Activated CD4-positive, alpha-beta T cell treated with anti-CD3 and anti-CD28 coated beads, Interleukin-2, amount 10 ng/mL, durations not matched to agents 24 days and 14 days (primary cell): ENCODE measurements at regions of chr2 and their contacts with region 1.

Region 1: DNA sequence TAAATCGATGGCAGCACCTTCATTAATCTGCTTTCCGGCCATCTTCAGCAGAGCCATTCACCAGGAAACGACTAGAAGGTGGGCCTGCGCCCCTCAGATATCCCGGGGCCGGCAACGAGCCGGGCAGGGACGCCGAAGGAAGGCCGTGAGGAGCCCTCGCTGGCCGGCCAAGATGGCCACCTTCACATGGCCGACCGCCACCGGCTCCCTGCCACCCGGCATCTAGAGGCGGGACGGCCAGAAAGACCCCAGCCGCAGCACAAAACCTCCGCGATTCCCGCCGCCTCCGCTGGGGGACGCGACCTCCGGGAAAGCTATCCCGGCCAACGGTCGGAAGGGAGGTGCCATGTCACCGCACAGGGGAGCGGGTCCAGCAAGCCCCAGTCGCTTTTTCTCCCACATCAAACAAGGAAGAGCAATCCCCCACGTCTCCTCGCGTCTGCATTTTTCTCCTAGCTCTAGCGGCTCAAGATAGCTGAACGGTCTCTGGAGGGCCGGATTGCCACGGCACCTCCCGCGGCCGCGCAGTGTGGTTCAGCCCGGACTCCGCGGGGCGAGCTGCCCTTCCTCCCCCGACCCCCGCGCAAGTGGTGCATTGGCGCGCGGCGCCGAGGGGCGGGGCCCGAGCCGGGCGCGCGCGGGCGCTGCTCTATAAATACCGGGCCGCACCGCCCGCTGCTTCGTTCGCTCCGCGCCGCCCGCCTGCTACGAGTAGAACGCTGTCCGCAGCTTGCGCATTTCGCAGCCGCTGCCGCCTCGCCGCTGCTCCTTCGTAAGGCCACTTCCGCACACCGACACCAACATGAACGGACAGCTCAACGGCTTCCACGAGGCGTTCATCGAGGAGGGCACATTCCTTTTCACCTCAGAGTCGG is at the start of gene MAT2A:
- DNase-seq: peak; percentile 97
- H3K4me3 Mint-ChIP-seq: peak within 1 kb of the TSS; percentile 96
- H3K27ac Mint-ChIP-seq: peak within 1 kb of the TSS; percentile 98
- H3K4me1 Mint-ChIP-seq: peaks cover 36% of the 10 kb centered on the region
- H3K27me3 Mint-ChIP-seq: no peaks in the 10 kb centered on the region
- total RNA-seq, gene MAT2A: 481 and 492 TPM in 2 replicates

Region 2: DNA sequence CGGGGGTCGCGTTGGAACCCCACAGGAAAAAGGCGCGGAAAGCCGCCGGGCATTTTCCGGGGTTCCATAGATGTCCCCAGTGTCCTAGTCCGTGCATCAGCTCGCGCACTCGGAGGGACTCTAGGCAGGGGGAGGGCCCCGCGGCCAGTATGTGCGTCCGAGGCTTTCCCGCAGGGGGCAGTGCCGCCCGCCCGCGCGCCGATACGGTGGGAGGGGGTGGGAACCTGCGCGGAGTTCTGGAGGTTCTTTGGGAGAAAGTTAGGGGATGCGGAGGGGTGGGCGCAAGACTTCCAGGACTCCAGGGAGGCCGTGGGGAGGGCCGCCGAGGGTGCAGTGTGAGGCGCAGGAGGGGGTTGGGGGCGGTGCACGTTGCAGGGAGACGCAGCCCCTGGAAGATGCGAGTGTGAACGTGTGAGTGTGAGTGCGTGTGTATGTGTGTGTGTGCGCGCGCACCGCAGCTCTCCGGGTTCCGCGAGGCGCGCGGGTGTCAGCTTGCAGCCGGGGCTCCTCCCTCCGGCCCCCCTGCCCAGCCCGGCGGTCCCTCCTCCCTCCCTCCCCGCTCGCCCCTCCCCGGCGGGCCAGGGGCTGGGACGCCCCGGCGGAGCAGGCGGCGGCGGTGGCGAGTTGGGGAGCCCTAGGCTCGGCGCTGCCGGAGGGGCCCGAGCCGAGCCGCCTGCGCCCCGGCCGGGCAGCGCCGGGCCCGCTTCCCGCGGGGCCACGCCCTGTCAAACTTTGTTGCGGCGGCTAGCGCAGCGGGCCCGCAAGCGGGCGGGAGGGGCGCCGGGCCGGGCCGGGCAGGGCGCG is 405.7 kb before region 1 on chr2 and contains the start of gene TCF7L1:
- intact Hi-C with region 1: no loop called
- DNase-seq: peak; percentile 80
- H3K4me3 Mint-ChIP-seq: peak within 1 kb of the TSS; percentile 78
- H3K27ac Mint-ChIP-seq: no peak within 1 kb of the TSS
- H3K4me1 Mint-ChIP-seq: peaks cover 9% of the 10 kb centered on the region
- H3K27me3 Mint-ChIP-seq: peaks cover 66% of the 10 kb centered on the region
- total RNA-seq, gene TCF7L1: 0.19 TPM in 1 of 2 replicates, not detected in the other

Region 3: DNA sequence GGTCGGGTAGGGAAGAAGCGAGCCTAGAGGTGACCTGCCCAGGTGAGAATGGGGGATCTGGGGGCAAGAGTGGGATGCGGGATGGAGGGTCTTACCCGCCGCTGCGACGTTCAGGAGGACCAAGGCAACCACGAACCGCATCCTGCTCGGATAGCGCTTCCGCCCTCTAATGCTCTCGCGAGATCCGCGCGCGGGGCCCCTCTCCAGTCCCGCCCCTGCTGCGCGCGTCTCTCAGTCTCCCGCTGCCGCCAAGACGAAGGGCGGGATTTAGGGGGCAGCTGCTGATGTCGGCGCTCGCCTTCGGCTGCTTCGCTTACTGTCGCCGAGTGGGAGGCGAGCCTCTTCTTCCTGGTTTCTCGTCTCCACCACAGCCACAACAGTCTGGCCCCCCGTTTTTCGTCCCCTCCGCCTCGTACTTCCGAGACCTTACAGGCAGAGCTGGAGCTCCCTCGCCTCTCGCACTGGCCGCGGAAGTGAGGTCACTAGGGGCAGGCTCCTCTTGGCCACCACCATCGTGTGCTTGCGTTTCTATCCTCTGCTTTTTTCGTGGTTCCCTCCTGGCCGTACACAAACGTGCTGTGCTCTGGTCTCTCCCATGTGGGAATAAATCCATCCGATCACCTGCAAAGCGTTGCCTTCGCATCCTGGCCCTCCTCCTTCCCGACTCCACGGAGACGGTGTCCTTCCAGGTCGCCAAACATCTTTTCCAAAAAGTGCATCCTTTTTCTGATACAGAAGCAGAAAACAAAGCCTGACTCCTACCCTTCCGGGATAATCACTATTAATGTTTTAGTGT is 210.7 kb before region 1 on chr2 and contains the start of gene TGOLN2:
- intact Hi-C with region 1: loop called (anchors 1 kb)
- DNase-seq: peak; percentile 98
- H3K4me3 Mint-ChIP-seq: peak within 1 kb of the TSS; percentile 95
- H3K27ac Mint-ChIP-seq: peak within 1 kb of the TSS; percentile 99
- H3K4me1 Mint-ChIP-seq: peaks cover 31% of the 10 kb centered on the region
- H3K27me3 Mint-ChIP-seq: no peaks in the 10 kb centered on the region
- total RNA-seq, gene TGOLN2: 89.6 and 94.1 TPM in 2 replicates

Region 4: DNA sequence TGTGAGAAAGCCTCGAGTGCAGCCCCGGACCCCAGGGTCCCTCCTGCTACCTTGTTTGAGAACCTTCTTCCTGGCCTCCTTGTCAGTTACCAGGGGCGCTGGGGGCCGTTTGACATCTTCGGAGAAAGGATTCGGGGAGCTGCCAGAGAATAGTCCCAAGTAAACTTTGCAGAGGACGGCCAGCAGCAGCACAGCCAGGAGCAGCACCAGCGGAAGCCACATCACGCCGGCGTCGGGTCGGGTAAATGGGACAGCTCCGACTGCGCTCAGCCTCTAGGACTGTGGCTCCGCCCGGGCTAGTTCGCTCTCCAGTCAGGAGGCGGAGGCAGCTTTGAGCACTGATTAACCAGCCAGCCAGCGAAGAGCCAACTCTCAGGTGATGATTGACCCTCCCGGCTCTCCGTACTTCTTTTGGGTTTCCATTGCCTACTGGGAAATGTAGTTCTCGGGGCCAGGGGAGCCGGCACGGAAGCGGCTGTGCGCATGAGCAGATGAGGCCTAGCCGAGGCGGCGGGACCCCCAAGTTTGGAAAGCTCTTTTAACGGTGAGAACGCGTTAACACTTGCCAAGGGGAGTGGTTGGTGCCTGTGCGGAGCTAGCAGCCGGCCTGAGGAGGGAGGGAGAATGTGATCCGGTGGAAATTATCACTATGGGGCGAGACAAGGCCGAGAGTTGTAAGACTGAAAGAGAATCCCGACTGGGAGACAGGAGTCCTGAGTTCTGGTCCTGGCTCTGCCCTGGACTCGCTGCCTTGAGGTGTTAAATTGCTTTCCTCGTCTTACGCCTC is 184.2 kb before region 1 on chr2 and contains the starts of genes ELMOD3 and RETSAT:
- intact Hi-C with region 1: loop called (anchors 1 kb)
- DNase-seq: peak; percentile 99
- H3K4me3 Mint-ChIP-seq: peak within 1 kb of the TSS; percentile 94
- H3K27ac Mint-ChIP-seq: peak within 1 kb of the TSS; percentile 94
- H3K4me1 Mint-ChIP-seq: peaks cover 26% of the 10 kb centered on the region
- H3K27me3 Mint-ChIP-seq: no peaks in the 10 kb centered on the region
- total RNA-seq, gene ELMOD3: 16.7 and 18.2 TPM in 2 replicates
- total RNA-seq, gene RETSAT: 21.0 and 25.0 TPM in 2 replicates

Region 5: DNA sequence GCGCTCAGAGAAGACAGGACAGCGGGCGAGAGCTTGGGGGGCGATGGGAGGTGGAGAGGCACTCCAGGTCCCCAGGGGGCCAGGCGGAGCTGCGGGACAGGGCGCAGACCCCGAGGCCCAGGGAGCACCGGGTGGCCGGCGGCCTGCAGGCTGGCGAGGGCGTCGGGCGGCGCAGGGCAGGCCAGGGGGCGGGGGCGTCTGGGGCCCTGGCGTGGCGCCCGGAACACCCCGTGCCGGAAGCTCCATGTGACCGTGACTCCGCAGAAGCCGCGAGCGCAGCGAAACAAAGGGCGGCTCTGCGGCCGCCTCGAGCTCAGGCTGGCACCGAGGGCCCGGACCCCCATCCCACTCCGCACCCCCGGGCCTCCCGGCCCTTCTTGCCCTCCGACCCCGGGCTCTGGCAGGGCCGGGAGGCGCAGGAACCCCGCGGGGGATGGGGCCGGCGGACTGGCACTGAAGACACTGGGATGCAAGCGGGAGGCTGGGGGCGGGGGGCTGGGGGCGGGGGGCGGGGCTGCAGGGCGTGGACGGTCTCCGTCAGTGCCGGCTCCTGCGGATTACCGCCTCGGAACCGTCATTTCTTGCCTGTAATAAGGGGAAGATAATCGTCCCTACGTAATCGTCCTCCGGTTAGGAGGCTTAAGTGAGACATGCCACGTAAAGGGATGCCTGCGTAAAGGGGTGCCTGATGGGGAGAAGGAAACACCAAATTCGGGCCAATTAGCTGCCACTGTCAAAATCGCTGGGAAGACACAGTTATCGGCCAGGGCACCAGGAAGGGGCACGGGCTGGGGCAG is 101.0 kb before region 1 on chr2:
- intact Hi-C with region 1: loop called (anchors 1 kb)
- DNase-seq: peak; percentile 91
- H3K4me3 Mint-ChIP-seq: peak overlapping the region; percentile 91
- H3K27ac Mint-ChIP-seq: peak overlapping the region; percentile 97
- H3K4me1 Mint-ChIP-seq: peaks cover 30% of the 10 kb centered on the region
- H3K27me3 Mint-ChIP-seq: no peaks in the 10 kb centered on the region

Region 6: DNA sequence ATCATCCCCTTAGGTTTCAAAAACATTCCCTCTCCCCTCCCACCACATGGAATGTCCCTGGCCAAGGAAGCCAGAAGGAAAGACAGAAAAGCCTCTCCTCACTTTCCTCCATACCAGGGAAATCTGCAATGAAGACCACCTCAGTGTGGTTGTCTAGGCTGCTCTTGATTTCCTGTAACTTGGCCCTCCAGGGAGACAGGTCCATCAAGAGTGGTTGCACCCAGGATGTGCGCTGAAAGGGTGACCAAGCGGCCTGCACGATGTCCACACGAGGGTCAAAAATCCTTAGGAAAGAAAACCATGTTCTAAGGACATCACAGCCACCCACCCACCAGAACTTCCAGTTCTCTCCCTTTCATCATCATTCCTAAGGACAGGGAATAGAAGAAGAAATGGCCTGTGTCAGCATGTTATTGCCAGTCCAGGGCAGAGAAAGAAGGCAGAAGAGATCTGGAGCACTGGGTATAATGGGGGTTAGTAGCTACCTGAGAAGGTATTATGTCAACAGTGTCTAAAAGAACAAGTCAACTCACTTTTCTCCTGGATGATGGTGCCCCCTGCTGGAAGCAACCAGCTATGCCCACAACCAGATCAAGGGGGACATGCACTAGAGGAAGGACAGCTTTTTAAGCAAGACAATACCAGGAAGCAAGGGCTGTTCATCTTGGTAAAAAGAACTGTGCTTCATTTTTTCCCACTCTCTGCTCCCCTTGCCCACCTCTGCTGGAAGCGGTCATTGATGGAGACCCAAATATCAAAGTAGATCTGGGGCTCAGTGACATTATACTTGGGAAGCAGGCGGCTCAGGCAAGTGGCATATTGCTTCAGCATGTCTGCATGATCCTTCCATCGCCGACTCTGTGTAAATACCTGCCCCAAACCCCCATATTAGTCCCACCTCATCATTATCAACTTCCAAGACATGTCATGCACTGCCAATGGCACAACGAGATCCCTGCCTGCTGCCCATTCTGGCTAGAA is 13.3 kb after region 1 on chr2:
- intact Hi-C with region 1: loop called (anchors 1 kb)
- DNase-seq: peak; percentile 96
- H3K4me3 Mint-ChIP-seq: no peak overlapping the region
- H3K27ac Mint-ChIP-seq: no peak overlapping the region
- H3K4me1 Mint-ChIP-seq: peaks cover 5% of the 10 kb centered on the region
- H3K27me3 Mint-ChIP-seq: no peaks in the 10 kb centered on the region

Region 7: GRCh38 chr2:85561317-85561979 is 22.7 kb after region 1 on chr2 and contains the start of gene GGCX:
- intact Hi-C with region 1: loop called (anchors 1 kb)
- DNase-seq: peak; percentile 97
- H3K4me3 Mint-ChIP-seq: peak within 1 kb of the TSS; percentile 97
- H3K27ac Mint-ChIP-seq: peak within 1 kb of the TSS; percentile 96
- H3K4me1 Mint-ChIP-seq: peaks cover 30% of the 10 kb centered on the region
- H3K27me3 Mint-ChIP-seq: no peaks in the 10 kb centered on the region
- total RNA-seq, gene GGCX: 21.8 and 23.1 TPM in 2 replicates

Region 8: GRCh38 chr2:85611705-85612587 is 73.2 kb after region 1 on chr2 and contains the start of gene C2orf68:
- intact Hi-C with region 1: loop called (anchors 5 kb)
- DNase-seq: peak; percentile 97
- H3K4me3 Mint-ChIP-seq: peak within 1 kb of the TSS; percentile 92
- H3K27ac Mint-ChIP-seq: peak within 1 kb of the TSS; percentile 91
- H3K4me1 Mint-ChIP-seq: peaks cover 13% of the 10 kb centered on the region
- H3K27me3 Mint-ChIP-seq: no peaks in the 10 kb centered on the region
- total RNA-seq, gene C2orf68: 36.6 and 36.9 TPM in 2 replicates